ENCODE measurements at regions of chr10 and their contacts with region 1.

Region 1: GRCh38 chr10:101536800-101537199 is 51.3 kb downstream of the POLL start:
- DNase-seq: peak; percentile 54
- H3K4me3 ChIP-seq: no peak overlapping the region
- H3K27ac ChIP-seq: no peak overlapping the region
- H3K4me1 ChIP-seq: no peaks in the 10 kb centered on the region
- H3K27me3 ChIP-seq: no peaks in the 10 kb centered on the region
- CTCF ChIP-seq: peak; percentile 68
- EP300 ChIP-seq: no peak
- RAD21 ChIP-seq: peak; percentile 53

Region 2: GRCh38 chr10:101525848-101526247 is 11.0 kb before region 1 on chr10:
- CTCF ChIA-PET with region 1: interaction called, 22 read pairs
- POLR2A ChIA-PET with region 1: no interaction called
- DNase-seq: no peak
- H3K4me3 ChIP-seq: no peak overlapping the region
- H3K27ac ChIP-seq: no peak overlapping the region
- H3K4me1 ChIP-seq: peaks cover 2 to 11% of the 10 kb centered on the region in 2 experiments; a peak in 2 of 4 replicates
- H3K27me3 ChIP-seq: no peaks in the 10 kb centered on the region
- CTCF ChIP-seq: no peak
- EP300 ChIP-seq: no peak
- RAD21 ChIP-seq: no peak

Region 3: GRCh38 chr10:101558202-101558601 is 21.4 kb after region 1 on chr10:
- CTCF ChIA-PET with region 1: interaction called, 18 read pairs
- POLR2A ChIA-PET with region 1: no interaction called
- DNase-seq: no peak
- H3K4me3 ChIP-seq: no peak overlapping the region
- H3K27ac ChIP-seq: peak overlapping the region in 1 of 2 experiments; percentile 95; a peak in 1 of 4 replicates
- H3K4me1 ChIP-seq: peaks cover 0 to 50% of the 10 kb centered on the region in 2 experiments; a peak in 1 of 4 replicates
- H3K27me3 ChIP-seq: no peaks in the 10 kb centered on the region
- CTCF ChIP-seq: no peak
- EP300 ChIP-seq: no peak
- RAD21 ChIP-seq: no peak

Measured in SK-N-SH (cell line).